Motor neuron (in vitro differentiated cells): ENCODE measurements at regions of chr6 and their contacts with region 1.

Region 1: DNA sequence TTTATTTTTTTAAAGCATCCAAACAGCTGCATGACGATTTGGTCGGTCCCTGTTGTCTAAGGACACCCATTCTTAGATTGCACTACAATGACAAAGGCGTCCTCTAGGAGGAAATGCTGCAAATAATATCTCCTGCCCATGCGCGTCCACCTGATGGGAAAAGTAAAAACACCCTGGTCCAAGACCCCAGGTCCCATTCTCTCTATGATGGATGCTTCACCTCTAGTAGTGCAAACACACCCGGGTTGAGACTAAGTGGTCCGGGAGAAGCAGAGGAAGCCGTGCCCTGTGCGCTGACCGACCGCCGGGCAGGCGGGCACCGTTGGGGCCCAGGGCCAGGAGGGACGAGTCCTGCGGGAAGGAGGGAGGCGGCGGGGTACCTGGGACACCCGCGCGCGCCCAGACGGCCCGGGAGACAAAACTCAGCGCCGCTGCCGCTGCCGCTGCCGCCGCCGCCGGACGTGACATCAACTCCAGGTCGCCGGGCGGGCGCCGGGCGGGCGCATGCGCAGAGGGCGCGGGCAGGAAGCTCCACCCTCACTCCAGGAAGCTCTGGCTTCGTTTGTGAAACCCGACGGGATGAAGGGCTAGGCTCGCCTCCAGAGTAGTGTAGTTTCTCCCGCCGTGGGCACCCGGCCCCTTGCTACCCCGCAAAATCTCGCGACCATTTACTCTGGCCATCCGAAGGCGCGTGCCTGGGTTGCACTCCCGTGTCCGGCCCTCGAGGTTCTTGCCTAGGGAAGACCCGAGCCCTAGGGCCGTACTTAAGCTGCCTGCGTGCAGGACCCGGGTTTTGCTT is at the start of gene TBC1D7:
- ATAC-seq: peak; percentile 92 to 96 (median 94)
- H3K4me3 ChIP-seq: peak within 1 kb of the TSS; percentile 79 to 100 (median 88)
- H3K27ac ChIP-seq: peak within 1 kb of the TSS; percentile 78 to 82
- H3K4me1 ChIP-seq: peaks cover 7 to 9% of the 10 kb centered on the region in 2 donors
- total RNA-seq, gene TBC1D7: 18.1 to 29.0 (median 25.9) TPM

Region 2: GRCh38 chr6:12911387-12911960 is 416.8 kb before region 1 on chr6:
- in situ Hi-C with region 1: loop called in 6 of 9 experiments (anchors 10 to 25 kb)
- ATAC-seq: no peak
- H3K4me3 ChIP-seq: no peak overlapping the region
- H3K27ac ChIP-seq: no peak overlapping the region
- H3K4me1 ChIP-seq: peaks cover 3 to 10% of the 10 kb centered on the region in 2 donors

Region 3: GRCh38 chr6:13538084-13538483 is 209.8 kb after region 1 on chr6:
- in situ Hi-C with region 1: loop called in 1 of 9 experiments (anchors 25 kb)
- ATAC-seq: peak in 3 of 8 experiments; percentile 35 to 65 (median 57)
- H3K4me3 ChIP-seq: no peak overlapping the region
- H3K27ac ChIP-seq: no peak overlapping the region
- H3K4me1 ChIP-seq: peaks cover 0 to 2% of the 10 kb centered on the region in 2 donors

Region 4: GRCh38 chr6:13574149-13574570 is 245.9 kb after region 1 on chr6:
- in situ Hi-C with region 1: loop called in 2 of 9 experiments (anchors 25 kb)
- ATAC-seq: peak; percentile 73 to 96 (median 90)
- H3K4me3 ChIP-seq: peak overlapping the region; percentile 56 to 78 (median 67)
- H3K27ac ChIP-seq: peak overlapping the region; percentile 64 to 81
- H3K4me1 ChIP-seq: peaks cover 5 to 6% of the 10 kb centered on the region in 2 donors

Region 5: GRCh38 chr6:13778028-13778427 is 449.8 kb after region 1 on chr6:
- in situ Hi-C with region 1: no loop called
- ATAC-seq: peak in 1 of 8 experiments; percentile 65
- H3K4me3 ChIP-seq: no peak overlapping the region
- H3K27ac ChIP-seq: no peak overlapping the region
- H3K4me1 ChIP-seq: no peaks in the 10 kb centered on the region

Region 6: DNA sequence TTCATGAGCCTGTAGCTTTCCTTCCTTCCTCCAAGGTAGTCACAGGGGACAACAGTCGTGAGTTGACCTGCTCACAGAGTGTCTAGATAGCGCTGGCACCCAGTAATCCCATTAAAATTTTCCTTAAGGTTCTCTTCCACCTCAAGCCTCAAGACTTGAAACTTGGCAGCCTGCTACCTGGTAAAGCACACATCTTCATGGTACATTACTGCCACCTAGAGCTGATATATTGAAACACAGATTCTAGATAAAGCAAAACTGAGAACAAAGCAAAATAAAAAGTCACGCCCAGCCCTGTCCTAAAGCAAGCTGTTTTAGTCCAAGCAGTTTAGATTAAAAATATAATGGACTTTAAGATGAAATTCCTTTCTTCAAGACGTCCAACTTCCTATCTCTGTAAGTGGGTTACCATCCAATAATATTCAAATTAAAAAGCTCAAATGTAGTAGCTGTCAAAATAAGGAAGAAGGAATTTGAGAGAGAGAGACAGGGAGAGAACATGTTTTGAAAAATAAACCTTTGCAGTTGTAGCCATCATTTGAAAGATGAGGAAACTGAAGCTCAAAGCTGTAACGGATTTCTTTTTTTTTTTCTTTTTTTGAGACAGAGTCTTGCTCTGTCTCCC is 738.6 kb after region 1 on chr6:
- in situ Hi-C with region 1: loop called in 3 of 9 experiments (anchors 25 kb)
- ATAC-seq: peak; percentile 39 to 89 (median 60)
- H3K4me3 ChIP-seq: no peak overlapping the region
- H3K27ac ChIP-seq: no peak overlapping the region
- H3K4me1 ChIP-seq: no peaks in the 10 kb centered on the region